Gastrocnemius medialis (tissue), 4 donors: ENCODE measurements at regions of chr1 and their contacts with region 1.

Region 1: DNA sequence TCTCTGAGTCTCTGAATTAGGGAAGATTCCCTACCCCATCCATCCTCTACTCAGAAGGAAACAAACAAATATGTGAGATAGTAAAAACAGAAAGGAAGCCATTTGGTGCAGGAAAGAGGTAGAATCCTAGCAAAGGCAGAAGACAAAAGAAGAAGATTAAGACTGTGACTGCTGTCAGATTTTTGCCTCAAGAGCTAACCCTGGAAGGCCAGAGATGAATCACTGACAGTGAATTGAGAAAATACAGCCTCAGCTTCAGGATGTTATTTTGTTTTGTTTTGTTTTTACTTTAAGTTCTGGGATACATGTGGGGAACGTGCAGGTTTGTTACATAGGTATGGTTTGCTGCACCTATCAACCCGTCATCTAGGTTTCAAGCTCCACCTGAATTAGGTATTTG is 31.7 kb downstream of the DSTYK start:
- DNase-seq: no peak
- ATAC-seq: no peak
- H3K4me3 ChIP-seq: no peak overlapping the region
- H3K27ac ChIP-seq: no peak overlapping the region
- H3K4me1 ChIP-seq: peaks cover 31 to 49% of the 10 kb centered on the region in 2 donors
- H3K27me3 ChIP-seq: no peaks in the 10 kb centered on the region
- CTCF ChIP-seq: no peak
- POLR2A ChIP-seq: no peak

Region 2: DNA sequence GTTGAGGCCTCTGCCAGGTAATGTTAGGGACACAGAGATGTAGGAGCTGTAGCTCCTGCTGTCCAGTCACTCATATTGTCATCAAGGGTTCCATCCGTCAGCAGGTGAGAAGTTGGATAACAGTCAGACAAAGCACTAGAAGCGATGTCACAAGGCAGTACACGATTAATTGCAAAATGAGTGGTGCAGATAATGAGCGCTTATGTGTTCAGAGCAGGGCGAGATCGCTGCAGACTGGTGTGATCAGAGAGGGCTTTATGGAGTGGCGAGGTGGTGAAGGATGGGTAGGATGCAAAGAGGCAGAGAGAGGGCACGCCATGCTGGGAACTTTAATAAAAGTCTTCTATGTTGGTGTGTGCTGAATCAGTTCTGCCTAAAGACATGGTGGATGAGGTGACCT is 56.7 kb after region 1 on chr1:
- in situ Hi-C with region 1: no loop called
- intact Hi-C with region 1: no loop called
- DNase-seq: no peak
- ATAC-seq: peak in 1 of 2 donors; percentile 1
- H3K4me3 ChIP-seq: no peak overlapping the region
- H3K27ac ChIP-seq: peak overlapping the region; percentile 71 to 86 (median 82)
- H3K4me1 ChIP-seq: peaks cover 71 to 82% of the 10 kb centered on the region in 2 donors
- H3K27me3 ChIP-seq: no peaks in the 10 kb centered on the region
- CTCF ChIP-seq: no peak
- POLR2A ChIP-seq: no peak

Region 3: DNA sequence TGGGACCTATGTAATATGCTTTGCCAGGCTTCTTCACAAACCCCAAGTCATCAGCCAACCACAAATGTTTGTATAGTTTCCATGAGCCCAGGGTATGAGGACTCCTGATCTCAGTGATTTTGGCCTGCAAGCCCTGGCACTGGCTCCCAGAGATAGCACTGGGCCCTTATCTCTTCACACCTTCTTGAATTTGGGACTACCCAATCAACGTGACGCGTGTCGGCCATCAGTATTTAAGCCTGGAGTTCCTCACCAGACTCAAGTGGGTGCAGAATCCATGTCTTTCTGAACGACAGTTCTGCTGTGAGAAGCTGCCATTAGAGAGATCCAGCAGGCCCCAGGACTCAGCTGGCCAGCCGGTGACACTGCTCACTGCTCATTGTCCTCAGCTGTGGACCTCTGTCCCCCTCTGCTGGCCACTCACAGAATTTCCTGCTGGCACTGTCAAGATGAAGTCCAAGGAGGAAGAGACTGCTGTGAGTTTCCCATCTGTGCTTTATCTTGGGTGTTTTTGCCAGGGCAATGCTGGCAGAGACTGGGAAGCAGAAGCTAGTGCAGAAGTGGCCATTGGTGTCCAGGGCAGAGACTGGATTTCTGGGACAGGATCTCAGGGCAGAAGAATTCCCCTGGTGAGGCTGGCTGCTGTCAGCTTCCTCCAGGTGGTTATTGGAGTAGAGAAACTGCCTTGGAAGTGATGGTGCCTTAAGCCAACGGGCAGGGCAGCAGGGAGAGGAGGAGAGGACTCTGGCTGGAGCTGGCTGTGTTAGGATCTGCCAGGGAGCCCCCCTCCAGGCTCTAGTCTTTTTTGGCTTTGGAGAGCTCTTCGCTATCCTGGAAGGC is 76.3 kb after region 1 on chr1:
- in situ Hi-C with region 1: no loop called
- intact Hi-C with region 1: loop called (anchors 5 kb)
- DNase-seq: peak; percentile 84 to 93
- ATAC-seq: peak; percentile 71 to 72
- H3K4me3 ChIP-seq: no peak overlapping the region
- H3K27ac ChIP-seq: peak overlapping the region; percentile 49 to 82 (median 74)
- H3K4me1 ChIP-seq: peaks cover 54 to 67% of the 10 kb centered on the region in 2 donors
- H3K27me3 ChIP-seq: no peaks in the 10 kb centered on the region
- CTCF ChIP-seq: peak; percentile 91 to 99 (median 99)
- POLR2A ChIP-seq: no peak